ENCODE measurements at regions of chr4 and their contacts with region 1.

Region 1: GRCh38 chr4:121192480-121192879 is 28.4 kb upstream of the TNIP3 start:
- DNase-seq: peak; percentile 69
- H3K4me3 ChIP-seq: peak overlapping the region; percentile 30
- H3K27ac ChIP-seq: no peak overlapping the region
- H3K4me1 ChIP-seq: no peaks in the 10 kb centered on the region
- H3K27me3 ChIP-seq: no peaks in the 10 kb centered on the region
- CTCF ChIP-seq: peak; percentile 86

Region 2: DNA sequence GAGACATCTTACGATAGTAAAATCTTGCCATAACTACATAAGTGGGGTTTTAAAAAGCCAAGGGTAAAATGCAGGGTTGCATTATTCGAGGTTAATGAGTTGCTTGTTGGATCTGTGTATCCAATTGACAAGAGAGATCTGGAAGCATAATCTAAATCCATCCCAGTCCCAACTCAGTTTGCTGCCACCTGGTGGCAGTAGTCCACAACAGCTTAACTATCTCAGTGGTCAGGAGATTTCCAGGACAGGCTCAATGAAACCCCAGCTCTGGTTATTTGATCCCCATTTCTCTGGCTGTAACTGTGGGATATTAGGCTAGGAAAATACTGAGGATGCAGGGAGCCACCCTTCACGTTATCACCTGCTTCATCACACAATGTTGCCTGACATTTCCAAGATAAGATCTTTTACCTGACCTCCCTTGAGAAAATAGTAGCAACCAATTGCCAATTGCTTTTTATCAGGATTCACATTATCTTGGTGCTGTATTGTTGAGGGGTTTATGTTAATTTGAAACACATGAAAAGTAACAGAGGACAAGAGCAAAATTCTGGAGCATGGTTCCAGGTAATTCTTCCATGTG is 59.8 kb after region 1 on chr4:
- CTCF ChIA-PET with region 1: interaction called, 10 read pairs
- POLR2A ChIA-PET with region 1: no interaction called
- intact Hi-C with region 1: loop called (anchors 1 kb)
- DNase-seq: peak; percentile 82
- H3K4me3 ChIP-seq: no peak overlapping the region
- H3K27ac ChIP-seq: no peak overlapping the region
- H3K4me1 ChIP-seq: peaks cover 8% of the 10 kb centered on the region
- H3K27me3 ChIP-seq: no peaks in the 10 kb centered on the region
- CTCF ChIP-seq: peak; percentile 86

Region 3: DNA sequence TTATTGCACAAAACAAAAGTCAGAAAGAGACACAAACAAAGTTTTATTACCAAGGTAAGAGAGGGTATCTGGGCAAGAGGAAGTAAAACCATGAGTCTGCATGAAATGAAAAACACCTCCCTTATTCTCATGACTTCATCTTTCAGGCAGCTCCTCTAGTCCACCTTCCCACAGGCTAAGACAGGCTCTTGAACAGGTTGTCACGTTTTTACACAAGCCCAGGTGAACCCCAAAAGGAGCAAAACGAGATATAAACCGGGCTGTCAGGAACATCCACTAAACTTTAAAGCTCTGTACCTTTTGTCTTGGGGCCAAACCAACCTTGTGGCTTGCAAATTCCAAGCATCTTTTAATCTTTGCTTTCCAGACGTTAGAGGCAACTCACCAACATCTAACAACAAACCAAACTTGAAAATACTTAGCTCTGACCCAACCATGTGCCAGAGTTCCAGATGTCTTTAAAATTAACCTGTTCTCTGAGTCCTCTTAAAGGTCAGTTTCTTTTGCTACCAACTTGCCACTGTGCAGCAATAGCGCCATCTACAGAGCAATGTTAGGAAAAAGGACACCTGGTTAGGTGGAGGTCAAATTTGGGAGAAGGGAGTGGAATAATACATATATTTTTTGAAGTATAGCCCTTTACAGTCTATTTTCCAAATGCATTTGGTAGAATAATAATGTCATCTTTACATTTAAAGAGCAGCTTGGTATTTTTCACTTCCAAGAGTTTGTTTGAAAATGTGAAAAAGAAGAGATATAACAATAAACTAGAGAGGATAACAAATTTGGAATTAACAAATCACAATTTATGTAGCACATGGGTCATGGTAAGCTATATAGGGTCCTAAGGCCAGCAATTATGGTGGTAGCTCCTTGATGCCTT is 115.2 kb after region 1 on chr4:
- CTCF ChIA-PET with region 1: interaction called, 5 read pairs
- POLR2A ChIA-PET with region 1: no interaction called
- intact Hi-C with region 1: loop called (anchors 2 kb)
- DNase-seq: peak; percentile 73
- H3K4me3 ChIP-seq: no peak overlapping the region
- H3K27ac ChIP-seq: no peak overlapping the region
- H3K4me1 ChIP-seq: no peaks in the 10 kb centered on the region
- H3K27me3 ChIP-seq: no peaks in the 10 kb centered on the region
- CTCF ChIP-seq: peak; percentile 88

Region 4: DNA sequence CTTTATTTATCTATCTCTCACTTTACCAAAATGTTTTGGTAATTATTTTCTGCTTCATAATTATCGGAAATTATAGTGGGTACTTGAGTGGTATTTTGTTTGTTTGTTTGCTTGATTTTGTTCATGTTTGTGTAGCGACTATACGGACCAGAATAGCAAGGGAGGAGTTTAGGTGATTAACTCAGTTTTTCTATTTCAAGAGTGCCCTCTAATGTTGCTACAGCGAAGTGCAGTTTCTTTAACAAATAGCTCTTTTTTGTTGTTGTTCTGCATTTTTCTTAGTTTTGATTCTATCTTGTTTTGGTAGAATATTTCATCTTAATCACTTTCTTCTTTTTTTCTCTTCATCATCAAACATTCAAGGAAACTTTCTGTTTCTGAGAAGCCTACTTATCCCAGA is 229.1 kb after region 1 on chr4:
- CTCF ChIA-PET with region 1: interaction called, 5 read pairs
- POLR2A ChIA-PET with region 1: no interaction called
- intact Hi-C with region 1: loop called (anchors 5 kb)
- DNase-seq: peak; percentile 49
- H3K4me3 ChIP-seq: no peak overlapping the region
- H3K27ac ChIP-seq: no peak overlapping the region
- H3K4me1 ChIP-seq: no peaks in the 10 kb centered on the region
- H3K27me3 ChIP-seq: no peaks in the 10 kb centered on the region
- CTCF ChIP-seq: peak; percentile 71

Region 5: DNA sequence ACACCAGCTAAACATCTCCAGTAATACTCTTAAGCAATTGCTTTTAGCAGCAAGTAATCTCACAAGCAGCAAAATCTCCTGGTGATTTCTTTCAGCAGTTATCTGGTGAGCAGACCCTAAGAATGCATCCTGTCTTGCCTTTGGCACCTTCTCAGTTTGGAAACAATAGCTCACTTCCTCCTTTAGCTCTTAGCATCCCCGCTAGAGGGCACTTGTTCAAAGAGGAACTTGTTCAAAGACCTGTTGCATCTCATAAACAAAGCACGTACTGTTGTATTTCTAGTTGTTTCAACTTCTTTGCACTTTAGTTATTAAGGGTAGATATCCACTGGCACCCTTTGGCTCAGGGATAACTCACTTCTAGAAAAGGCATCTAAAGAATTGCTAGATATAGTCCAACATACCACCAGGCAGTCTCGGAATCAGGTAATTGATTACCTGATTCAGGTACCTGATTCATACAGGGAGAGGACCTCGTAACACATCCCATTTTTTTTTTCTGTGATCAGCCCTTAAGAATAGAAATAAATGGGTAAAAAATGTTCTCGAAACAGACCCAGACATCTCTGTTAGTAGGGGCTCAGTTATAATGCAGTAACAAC is 270.3 kb after region 1 on chr4:
- CTCF ChIA-PET with region 1: interaction called, 4 read pairs
- POLR2A ChIA-PET with region 1: no interaction called
- intact Hi-C with region 1: loop called (anchors 10 kb)
- DNase-seq: peak; percentile 88
- H3K4me3 ChIP-seq: no peak overlapping the region
- H3K27ac ChIP-seq: no peak overlapping the region
- H3K4me1 ChIP-seq: peaks cover 3% of the 10 kb centered on the region
- H3K27me3 ChIP-seq: no peaks in the 10 kb centered on the region
- CTCF ChIP-seq: peak; percentile 83

Region 6: GRCh38 chr4:121656269-121656641 is 463.8 kb after region 1 on chr4:
- CTCF ChIA-PET with region 1: interaction called, 3 read pairs
- POLR2A ChIA-PET with region 1: no interaction called
- intact Hi-C with region 1: loop called (anchors 5 kb)
- DNase-seq: peak; percentile 79
- H3K4me3 ChIP-seq: no peak overlapping the region
- H3K27ac ChIP-seq: no peak overlapping the region
- H3K4me1 ChIP-seq: peaks cover 10% of the 10 kb centered on the region
- H3K27me3 ChIP-seq: no peaks in the 10 kb centered on the region
- CTCF ChIP-seq: peak; percentile 69

Region 7: GRCh38 chr4:121736735-121737351 is 544.4 kb after region 1 on chr4:
- CTCF ChIA-PET with region 1: interaction called, 3 read pairs
- POLR2A ChIA-PET with region 1: no interaction called
- intact Hi-C with region 1: loop called (anchors 5 kb)
- DNase-seq: peak; percentile 72
- H3K4me3 ChIP-seq: no peak overlapping the region
- H3K27ac ChIP-seq: no peak overlapping the region
- H3K4me1 ChIP-seq: no peaks in the 10 kb centered on the region
- H3K27me3 ChIP-seq: no peaks in the 10 kb centered on the region
- CTCF ChIP-seq: peak; percentile 69

Measured in A673 (cell line).